Activated CD8-positive, alpha-beta T cell treated with anti-CD3 and anti-CD28 coated beads for 36 hours (primary cell): ENCODE measurements at regions of chr2 and their contacts with region 1.

Region 1: DNA sequence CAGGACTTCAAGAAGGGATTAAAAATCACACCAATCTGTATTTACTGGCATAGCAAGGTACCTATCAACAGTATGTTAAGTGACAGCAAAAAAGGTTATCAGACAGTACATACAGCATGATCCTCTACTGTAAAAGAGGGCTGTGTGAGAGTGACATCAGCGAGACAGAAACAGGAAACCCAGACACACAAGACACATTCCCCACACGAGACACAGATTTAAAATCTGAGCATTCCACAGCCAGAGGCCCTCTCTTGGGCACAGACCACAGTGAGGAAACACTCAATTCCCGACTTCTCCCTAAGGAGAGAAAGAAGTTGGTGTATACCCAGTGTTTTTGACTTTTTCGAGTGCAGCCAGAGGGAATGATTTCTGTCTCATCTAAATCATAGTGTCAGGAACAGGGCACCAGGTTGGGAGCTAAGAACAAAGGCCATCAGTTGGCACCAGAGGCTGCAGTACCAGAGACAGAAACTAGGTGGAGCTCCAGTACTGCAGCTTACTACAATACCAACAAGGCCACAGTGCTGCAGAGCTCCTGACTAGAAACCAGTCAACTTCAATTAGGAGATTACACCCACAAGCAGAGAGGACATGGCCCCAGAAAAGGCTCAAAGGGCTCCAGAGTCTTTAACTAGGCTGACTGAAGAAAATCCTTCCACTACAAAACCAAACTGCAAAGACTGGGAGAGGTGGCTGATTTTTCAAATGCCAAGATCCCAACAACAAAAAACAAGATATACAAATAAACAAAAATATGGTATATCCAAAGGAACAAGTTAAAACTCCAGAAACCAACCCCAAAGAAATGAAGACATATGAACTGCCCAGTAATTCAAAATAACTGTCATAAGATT is 41.0 kb downstream of the UNC50 start:
- DNase-seq: peak; percentile 93
- ATAC-seq: peak; percentile 99
- H3K4me3 Mint-ChIP-seq: no peak overlapping the region
- H3K27ac Mint-ChIP-seq: peak overlapping the region; percentile 88
- H3K4me1 Mint-ChIP-seq: peaks cover 63% of the 10 kb centered on the region
- H3K27me3 Mint-ChIP-seq: no peaks in the 10 kb centered on the region
- CTCF ChIP-seq: peak; percentile 90

Region 2: DNA sequence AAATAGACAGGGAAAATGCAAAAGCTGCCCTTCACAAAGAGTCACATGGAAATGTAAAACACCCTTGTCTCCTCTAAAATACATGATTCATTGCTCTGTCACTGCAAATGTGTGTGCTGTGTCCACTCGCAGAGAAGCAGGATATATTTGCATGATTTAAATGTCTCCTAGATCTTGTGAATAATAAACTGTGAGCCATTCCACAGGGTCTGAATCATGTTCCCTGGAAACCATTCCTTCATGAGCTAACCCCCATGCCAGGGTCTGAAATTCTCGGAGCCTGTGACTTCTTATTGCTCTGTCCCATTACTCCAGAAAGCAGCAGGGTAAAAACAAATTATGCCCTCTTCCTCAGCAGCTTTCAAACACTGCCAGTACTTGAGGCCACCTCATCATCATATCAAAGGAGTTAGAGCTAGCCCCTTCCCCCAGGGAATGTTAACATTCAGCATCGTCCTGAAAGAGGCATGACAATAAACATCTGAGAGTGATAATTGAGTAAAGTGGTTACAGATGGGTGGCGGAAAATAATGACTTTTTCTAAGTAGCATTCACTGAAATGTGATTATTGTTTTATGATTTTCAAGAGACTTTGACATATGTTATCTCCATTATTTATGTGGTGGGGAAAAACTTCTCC is 314.8 kb before region 1 on chr2:
- CTCF ChIA-PET with region 1: no interaction called
- POLR2A ChIA-PET with region 1: no interaction called
- intact Hi-C with region 1: no loop called
- DNase-seq: no peak
- ATAC-seq: no peak
- H3K4me3 Mint-ChIP-seq: no peak overlapping the region
- H3K27ac Mint-ChIP-seq: no peak overlapping the region
- H3K4me1 Mint-ChIP-seq: no peaks in the 10 kb centered on the region
- H3K27me3 Mint-ChIP-seq: peaks cover 17% of the 10 kb centered on the region
- CTCF ChIP-seq: no peak

Region 3: DNA sequence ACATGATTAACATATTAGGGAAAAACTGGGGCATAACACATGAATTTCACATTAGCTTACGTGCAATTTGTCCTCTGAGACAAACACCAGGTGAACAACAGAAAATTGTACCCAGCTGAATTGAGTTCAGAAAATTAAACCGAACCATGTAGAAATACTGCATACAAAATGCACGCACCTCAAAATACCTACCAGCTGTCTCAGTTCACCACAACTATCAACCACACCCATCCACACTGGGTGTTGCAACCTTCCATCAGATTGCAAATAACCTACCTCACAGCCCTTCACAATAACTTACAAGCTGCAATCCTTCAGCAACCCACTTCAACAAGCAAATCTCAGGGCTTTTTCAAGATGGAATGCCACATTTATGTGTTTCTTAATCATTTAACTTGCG is 15.0 kb after region 1 on chr2:
- CTCF ChIA-PET with region 1: interaction called, 10 read pairs
- POLR2A ChIA-PET with region 1: no interaction called
- intact Hi-C with region 1: no loop called
- DNase-seq: peak; percentile 78
- ATAC-seq: peak; percentile 42
- H3K4me3 Mint-ChIP-seq: peak overlapping the region; percentile 81
- H3K27ac Mint-ChIP-seq: peak overlapping the region; percentile 100
- H3K4me1 Mint-ChIP-seq: peaks cover 63% of the 10 kb centered on the region
- H3K27me3 Mint-ChIP-seq: no peaks in the 10 kb centered on the region
- CTCF ChIP-seq: no peak

Region 4: GRCh38 chr2:98771721-98772524 is 122.6 kb after region 1 on chr2:
- CTCF ChIA-PET with region 1: interaction called, 10 read pairs
- POLR2A ChIA-PET with region 1: interaction called, 3 read pairs
- intact Hi-C with region 1: loop called (anchors 5 kb)
- DNase-seq: peak; percentile 78
- ATAC-seq: peak; percentile 64
- H3K4me3 Mint-ChIP-seq: peak overlapping the region; percentile 85
- H3K27ac Mint-ChIP-seq: peak overlapping the region; percentile 98
- H3K4me1 Mint-ChIP-seq: peaks cover 69% of the 10 kb centered on the region
- H3K27me3 Mint-ChIP-seq: no peaks in the 10 kb centered on the region
- CTCF ChIP-seq: no peak

Region 5: DNA sequence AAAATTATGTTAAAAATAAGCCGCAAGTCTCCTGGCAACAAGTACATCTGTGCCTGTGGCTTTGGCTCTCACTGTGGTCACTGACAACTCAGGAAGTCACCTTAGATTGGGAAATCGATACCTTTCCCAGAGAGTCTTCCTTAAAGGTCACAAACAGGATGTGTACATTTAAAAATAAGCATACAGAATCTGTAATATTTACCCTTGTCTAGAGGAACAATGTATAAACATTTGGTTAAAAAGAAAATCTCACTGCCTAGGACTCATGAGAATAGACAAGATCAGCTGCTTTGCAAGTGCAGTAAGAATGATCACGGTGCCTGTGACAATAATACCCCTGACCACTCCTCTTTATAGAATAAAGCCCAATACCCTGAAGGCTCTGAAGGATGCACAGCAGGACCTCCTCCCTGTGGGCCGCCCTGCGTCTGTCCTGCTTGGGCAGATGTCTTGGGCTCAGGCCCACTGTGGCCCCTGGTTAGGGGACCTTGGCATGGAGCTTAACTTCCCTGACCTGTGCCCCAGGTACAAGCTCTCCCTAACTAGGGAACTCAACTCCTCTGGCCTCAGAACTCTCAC is 179.5 kb after region 1 on chr2:
- CTCF ChIA-PET with region 1: interaction called, 19 read pairs
- POLR2A ChIA-PET with region 1: interaction called, 3 read pairs
- intact Hi-C with region 1: no loop called
- DNase-seq: no peak
- ATAC-seq: no peak
- H3K4me3 Mint-ChIP-seq: no peak overlapping the region
- H3K27ac Mint-ChIP-seq: peak overlapping the region; percentile 21
- H3K4me1 Mint-ChIP-seq: peaks cover 39% of the 10 kb centered on the region
- H3K27me3 Mint-ChIP-seq: no peaks in the 10 kb centered on the region
- CTCF ChIP-seq: no peak